BJ (cell line): ENCODE measurements at regions of chr3 and their contacts with region 1.

Region 1: GRCh38 chr3:120587332-120587975 is 8.7 kb upstream of the NDUFB4 start:
- DNase-seq: no peak
- H3K4me3 ChIP-seq: no peak overlapping the region
- H3K27me3 ChIP-seq: no peaks in the 10 kb centered on the region
- CTCF ChIP-seq: no peak

Region 2: GRCh38 chr3:120604784-120605183 is 17.3 kb after region 1 on chr3:
- CTCF ChIA-PET with region 1: no interaction called
- POLR2A ChIA-PET with region 1: no interaction called
- DNase-seq: no peak
- H3K4me3 ChIP-seq: no peak overlapping the region
- H3K27me3 ChIP-seq: no peaks in the 10 kb centered on the region
- CTCF ChIP-seq: no peak

Region 3: GRCh38 chr3:120773932-120774331 is 186.5 kb after region 1 on chr3:
- CTCF ChIA-PET with region 1: no interaction called
- POLR2A ChIA-PET with region 1: interaction called, 11 read pairs
- DNase-seq: no peak
- H3K4me3 ChIP-seq: no peak overlapping the region
- H3K27me3 ChIP-seq: no peaks in the 10 kb centered on the region
- CTCF ChIP-seq: no peak